Lower leg skin (tissue), 4 donors: ENCODE measurements at regions of chr2 and their contacts with region 1.

Region 1: DNA sequence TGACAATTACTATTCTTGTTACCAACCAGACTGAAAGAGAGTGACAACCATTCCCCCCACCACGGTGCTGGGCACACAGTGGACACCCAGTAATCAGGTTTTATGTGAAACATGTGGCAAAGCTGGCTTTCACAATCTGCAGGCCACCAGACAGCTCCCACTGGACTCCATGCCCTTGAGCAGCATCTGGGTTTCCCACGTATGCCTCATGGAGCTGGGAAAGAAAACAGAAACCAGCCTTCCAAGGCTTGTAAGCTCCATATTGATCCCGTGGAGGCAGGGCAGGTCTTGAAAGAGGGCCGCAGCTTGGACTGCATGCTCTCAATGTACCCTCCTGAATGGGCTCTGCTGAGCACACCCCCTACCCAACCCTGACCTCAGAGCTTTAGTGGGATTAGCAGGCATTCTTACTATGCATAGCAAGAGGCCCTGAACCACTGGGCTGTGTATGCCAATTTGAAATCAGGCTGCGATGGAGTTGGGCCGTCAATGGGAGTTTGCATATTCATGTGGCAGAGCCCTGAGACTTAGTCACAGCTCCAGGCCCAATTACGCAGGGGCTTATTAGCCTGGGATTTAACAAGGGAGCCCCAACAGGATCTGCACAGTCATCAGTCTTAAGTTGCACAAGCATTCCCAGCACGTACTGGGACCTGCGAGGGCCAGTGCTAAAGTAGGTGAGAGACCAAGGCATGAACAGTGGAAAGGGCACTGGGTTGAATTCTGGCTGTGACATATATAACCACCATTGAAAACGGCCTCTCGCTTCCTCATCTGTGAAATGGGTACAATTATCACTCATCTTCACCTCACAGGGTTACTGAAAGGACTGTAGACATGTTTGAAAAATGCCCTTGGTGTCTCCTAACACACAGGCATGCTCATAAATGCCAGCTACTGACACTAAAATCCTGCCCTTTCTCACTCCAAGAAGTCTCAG is 10.5 kb downstream of the C1QL2 start:
- DNase-seq: no peak
- H3K4me3 ChIP-seq: no peak overlapping the region
- CTCF ChIP-seq: no peak
- POLR2A ChIP-seq: no peak

Region 2: GRCh38 chr2:118520246-118520645 is 627.8 kb before region 1 on chr2:
- intact Hi-C with region 1: no loop called
- DNase-seq: no peak
- H3K4me3 ChIP-seq: no peak overlapping the region
- CTCF ChIP-seq: no peak
- POLR2A ChIP-seq: no peak

Region 3: DNA sequence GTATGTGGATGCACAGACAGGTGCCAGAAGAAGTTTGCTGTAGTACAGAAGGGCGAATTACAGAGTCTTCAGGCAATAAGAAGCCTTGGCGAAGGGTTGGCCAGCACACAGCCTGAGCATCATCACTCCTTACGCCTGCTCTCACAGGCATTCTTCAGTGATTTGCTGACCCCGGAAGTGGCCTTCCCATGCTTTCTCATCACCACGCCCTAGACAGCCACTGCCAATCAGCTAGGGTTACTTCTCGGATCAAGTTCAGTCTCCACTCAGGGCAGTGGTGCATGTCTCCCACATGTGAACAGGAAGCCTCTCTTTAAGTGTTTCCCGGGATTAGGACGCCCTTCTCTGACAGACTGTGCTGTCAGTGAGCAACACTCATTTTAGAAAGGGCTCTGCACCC is 71.3 kb before region 1 on chr2:
- intact Hi-C with region 1: no loop called
- DNase-seq: peak in 1 of 2 donors; percentile 45
- H3K4me3 ChIP-seq: no peak overlapping the region
- CTCF ChIP-seq: no peak
- POLR2A ChIP-seq: no peak

Region 4: DNA sequence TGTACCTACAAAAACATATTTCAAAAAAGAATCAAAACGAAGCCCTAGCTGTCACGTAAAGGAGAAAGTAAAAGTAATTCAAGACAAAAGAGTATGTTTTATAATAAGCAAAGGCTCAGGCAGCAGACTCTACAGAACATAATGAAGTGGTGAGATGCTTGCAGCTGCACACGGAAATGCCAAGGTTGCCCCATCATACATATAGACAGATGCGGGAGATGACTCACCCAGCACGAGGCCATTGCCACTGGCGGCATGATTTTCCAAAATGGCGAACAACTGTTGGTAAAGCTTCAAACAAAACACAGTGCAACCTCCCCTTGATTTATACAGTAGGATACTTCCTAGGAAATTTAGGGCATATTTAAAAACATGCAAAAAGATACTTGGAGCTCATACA is 36.5 kb after region 1 on chr2:
- intact Hi-C with region 1: loop called (anchors 1 kb)
- DNase-seq: no peak
- H3K4me3 ChIP-seq: no peak overlapping the region
- CTCF ChIP-seq: no peak
- POLR2A ChIP-seq: no peak